Activated T-helper 1 cell treated with anti-CD3 and anti-CD28 coated beads, Interleukin-12 subunit alpha, Interleukin-12 subunit beta, Interleukin-2, Interleukin-4 antibody, amounts not matched to agents 30 ng/mL and 10 ng/mL and 1 ng/mL, durations not matched to agents 14 hours and 24 hours and 36 hours (primary cell): ENCODE measurements at regions of chr3 and their contacts with region 1.

Region 1: GRCh38 chr3:114056130-114057010 is at the starts of genes CCDC191 and QTRT2:
- DNase-seq: peak; percentile 98
- H3K4me3 Mint-ChIP-seq: peak within 1 kb of the TSS; percentile 98
- H3K27ac Mint-ChIP-seq: peak within 1 kb of the TSS; percentile 97
- H3K4me1 Mint-ChIP-seq: peaks cover 53% of the 10 kb centered on the region
- H3K27me3 Mint-ChIP-seq: peaks cover 2% of the 10 kb centered on the region
- total RNA-seq, gene CCDC191: 1.1 and 2.1 TPM in 2 replicates
- total RNA-seq, gene QTRT2: 54.9 and 57.6 TPM in 2 replicates

Region 2: GRCh38 chr3:113531826-113532697 is 524.3 kb before region 1 on chr3 and contains the start of gene SIDT1:
- intact Hi-C with region 1: loop called (anchors 2 kb)
- DNase-seq: peak; percentile 64
- H3K4me3 Mint-ChIP-seq: peak within 1 kb of the TSS; percentile 100
- H3K27ac Mint-ChIP-seq: peak within 1 kb of the TSS; percentile 99
- H3K4me1 Mint-ChIP-seq: peaks cover 55% of the 10 kb centered on the region
- H3K27me3 Mint-ChIP-seq: peaks cover 10% of the 10 kb centered on the region
- total RNA-seq, gene SIDT1: 11.3 and 12.2 TPM in 2 replicates

Region 3: GRCh38 chr3:113838631-113839209 is 217.7 kb before region 1 on chr3 and contains the start of gene GRAMD1C:
- intact Hi-C with region 1: loop called (anchors 1 kb)
- DNase-seq: peak; percentile 79
- H3K4me3 Mint-ChIP-seq: peak within 1 kb of the TSS; percentile 79
- H3K27ac Mint-ChIP-seq: no peak within 1 kb of the TSS
- H3K4me1 Mint-ChIP-seq: peaks cover 8% of the 10 kb centered on the region
- H3K27me3 Mint-ChIP-seq: peaks cover 12% of the 10 kb centered on the region
- total RNA-seq, gene GRAMD1C: 0.05 TPM in 1 of 2 replicates, not detected in the other

Region 4: GRCh38 chr3:114213627-114214541 is 157.5 kb after region 1 on chr3:
- intact Hi-C with region 1: loop called (anchors 1 kb)
- DNase-seq: peak; percentile 57
- H3K4me3 Mint-ChIP-seq: no peak overlapping the region
- H3K27ac Mint-ChIP-seq: no peak overlapping the region
- H3K4me1 Mint-ChIP-seq: no peaks in the 10 kb centered on the region
- H3K27me3 Mint-ChIP-seq: no peaks in the 10 kb centered on the region

Region 5: GRCh38 chr3:114332342-114333179 is 276.2 kb after region 1 on chr3:
- intact Hi-C with region 1: loop called (anchors 5 kb)
- DNase-seq: no peak
- H3K4me3 Mint-ChIP-seq: peak overlapping the region; percentile 20
- H3K27ac Mint-ChIP-seq: peak overlapping the region; percentile 86
- H3K4me1 Mint-ChIP-seq: peaks cover 51% of the 10 kb centered on the region
- H3K27me3 Mint-ChIP-seq: peaks cover 3% of the 10 kb centered on the region

Region 6: DNA sequence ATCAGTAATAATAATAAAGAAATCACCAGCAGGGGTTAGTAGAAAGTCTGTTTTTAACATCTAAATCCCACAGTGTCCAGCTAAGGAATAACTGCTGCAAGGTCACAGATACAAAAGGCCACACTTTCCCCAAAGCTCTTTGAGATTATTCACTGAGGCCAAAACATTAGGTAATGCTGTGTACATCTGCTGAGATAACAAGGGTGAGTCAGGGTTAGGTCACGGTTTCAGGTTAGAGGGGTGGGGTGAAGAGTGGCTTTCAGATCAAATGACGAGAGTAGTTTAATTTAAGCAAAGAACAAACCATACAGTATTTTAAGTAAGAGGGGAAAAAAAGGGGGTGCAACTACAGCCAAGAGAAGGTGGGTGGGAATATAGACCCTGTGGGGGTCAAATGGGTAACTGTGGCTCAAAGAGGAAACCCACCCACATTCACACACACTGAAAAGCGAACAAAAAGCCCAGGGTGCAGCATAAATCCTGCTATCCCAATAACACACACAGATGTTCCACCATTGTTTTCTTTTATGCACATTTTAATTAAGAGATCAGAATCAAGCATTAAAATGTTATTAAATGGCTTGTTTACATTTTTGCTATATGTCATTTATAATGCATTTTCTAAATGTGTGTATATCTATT is 650.3 kb after region 1 on chr3:
- intact Hi-C with region 1: no loop called
- DNase-seq: no peak
- H3K4me3 Mint-ChIP-seq: no peak overlapping the region
- H3K27ac Mint-ChIP-seq: no peak overlapping the region
- H3K4me1 Mint-ChIP-seq: peaks cover 8% of the 10 kb centered on the region
- H3K27me3 Mint-ChIP-seq: no peaks in the 10 kb centered on the region

Region 7: GRCh38 chr3:115783938-115784738 is 1727.8 kb after region 1 on chr3:
- intact Hi-C with region 1: loop called (anchors 5 kb)
- DNase-seq: peak; percentile 76
- H3K4me3 Mint-ChIP-seq: peak overlapping the region; percentile 83
- H3K27ac Mint-ChIP-seq: peak overlapping the region; percentile 95
- H3K4me1 Mint-ChIP-seq: peaks cover 12% of the 10 kb centered on the region
- H3K27me3 Mint-ChIP-seq: peaks cover 8% of the 10 kb centered on the region